ENCODE measurements at regions of chr18 and their contacts with region 1.

Region 1: GRCh38 chr18:3604498-3605408 is 154.8 kb downstream of the TGIF1 start:
- DNase-seq: peak in 3 of 4 experiments; percentile 38 to 77 (median 39)
- ATAC-seq: peak; percentile 38
- H3K4me3 ChIP-seq: peak overlapping the region; percentile 55
- H3K27ac ChIP-seq: peak overlapping the region; percentile 97
- H3K4me1 ChIP-seq: peaks cover 37 to 51% of the 10 kb centered on the region in 2 experiments
- H3K27me3 ChIP-seq: no peaks in the 10 kb centered on the region
- CTCF ChIP-seq: no peak
- EP300 ChIP-seq: peak; percentile 60
- POLR2A ChIP-seq: no peak
- RAD21 ChIP-seq: no peak; a peak in 2 of 4 replicates

Region 2: DNA sequence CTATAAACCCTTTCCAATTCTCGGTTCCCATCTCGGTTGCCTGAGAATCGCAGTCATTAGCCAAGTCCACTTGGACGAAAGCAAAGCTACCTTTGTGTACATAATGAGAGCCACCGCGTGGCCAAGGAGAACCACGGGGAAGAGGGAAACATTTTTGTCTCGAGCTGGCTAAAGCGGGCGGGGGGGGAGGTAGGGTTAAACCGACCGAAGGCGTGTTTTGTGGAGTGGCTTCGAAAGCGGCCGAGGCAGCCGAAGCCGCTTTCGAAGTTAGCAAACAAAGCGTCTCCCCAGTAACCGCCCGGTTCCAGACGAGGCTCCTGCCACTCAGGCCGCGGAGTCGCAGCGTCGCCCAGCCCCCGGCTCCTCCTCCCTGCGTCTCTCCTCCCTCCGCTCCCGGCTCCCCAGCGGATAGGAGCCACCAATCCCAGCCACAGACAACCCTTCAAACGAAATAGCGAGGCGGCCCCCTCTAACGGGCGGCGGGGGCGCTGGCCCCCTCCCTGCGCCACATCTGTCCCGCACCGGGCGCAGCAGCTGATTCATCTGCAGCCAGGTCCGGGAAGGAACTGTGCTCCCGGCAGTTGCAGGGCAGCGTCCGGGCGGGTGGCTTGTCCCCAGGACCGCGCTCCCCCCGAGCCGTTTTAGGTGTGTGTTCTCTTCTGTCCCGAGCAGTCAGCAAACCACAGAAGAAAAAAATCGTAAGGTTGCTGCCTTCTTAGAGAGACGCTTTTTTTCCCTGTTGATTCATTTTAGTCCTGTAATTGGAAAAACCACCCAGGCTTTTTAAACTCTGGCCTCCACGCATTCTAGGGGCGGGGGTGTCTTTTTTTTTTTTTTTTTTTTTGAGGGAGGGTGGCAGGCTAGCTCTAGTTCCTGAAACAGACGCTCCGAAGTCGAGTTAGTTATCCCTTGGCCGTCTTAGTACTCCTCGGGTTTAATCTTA is 156.6 kb before region 1 on chr18:
- CTCF ChIA-PET with region 1: no interaction called
- POLR2A ChIA-PET with region 1: interaction called, 35 read pairs
- in situ Hi-C with region 1: loop called (anchors 5 kb)
- intact Hi-C with region 1: loop called (anchors 2 kb)
- DNase-seq: peak; percentile 85 to 99 (median 89)
- ATAC-seq: peak; percentile 78
- H3K4me3 ChIP-seq: peak overlapping the region; percentile 87
- H3K27ac ChIP-seq: peak overlapping the region; percentile 98
- H3K4me1 ChIP-seq: peaks cover 31 to 51% of the 10 kb centered on the region in 2 experiments
- H3K27me3 ChIP-seq: no peaks in the 10 kb centered on the region
- CTCF ChIP-seq: peak in 2 of 3 experiments; percentile 31 to 49; a peak in 2 of 6 replicates
- EP300 ChIP-seq: peak; percentile 81
- POLR2A ChIP-seq: no peak
- RAD21 ChIP-seq: peak in 1 of 2 experiments; percentile 33; a peak in 3 of 4 replicates

Region 3: GRCh38 chr18:3593904-3594661 is 10.7 kb before region 1 on chr18:
- CTCF ChIA-PET with region 1: no interaction called
- POLR2A ChIA-PET with region 1: interaction called, 76 read pairs
- in situ Hi-C with region 1: no loop called
- intact Hi-C with region 1: loop called (anchors 1 kb)
- DNase-seq: peak; percentile 82 to 97 (median 86)
- ATAC-seq: peak; percentile 61
- H3K4me3 ChIP-seq: peak overlapping the region; percentile 42
- H3K27ac ChIP-seq: peak overlapping the region; percentile 94
- H3K4me1 ChIP-seq: peaks cover 44 to 60% of the 10 kb centered on the region in 2 experiments
- H3K27me3 ChIP-seq: no peaks in the 10 kb centered on the region
- CTCF ChIP-seq: peak; percentile 87 to 94 (median 90)
- EP300 ChIP-seq: peak; percentile 70
- POLR2A ChIP-seq: no peak
- RAD21 ChIP-seq: peak; percentile 48 to 66

Region 4: DNA sequence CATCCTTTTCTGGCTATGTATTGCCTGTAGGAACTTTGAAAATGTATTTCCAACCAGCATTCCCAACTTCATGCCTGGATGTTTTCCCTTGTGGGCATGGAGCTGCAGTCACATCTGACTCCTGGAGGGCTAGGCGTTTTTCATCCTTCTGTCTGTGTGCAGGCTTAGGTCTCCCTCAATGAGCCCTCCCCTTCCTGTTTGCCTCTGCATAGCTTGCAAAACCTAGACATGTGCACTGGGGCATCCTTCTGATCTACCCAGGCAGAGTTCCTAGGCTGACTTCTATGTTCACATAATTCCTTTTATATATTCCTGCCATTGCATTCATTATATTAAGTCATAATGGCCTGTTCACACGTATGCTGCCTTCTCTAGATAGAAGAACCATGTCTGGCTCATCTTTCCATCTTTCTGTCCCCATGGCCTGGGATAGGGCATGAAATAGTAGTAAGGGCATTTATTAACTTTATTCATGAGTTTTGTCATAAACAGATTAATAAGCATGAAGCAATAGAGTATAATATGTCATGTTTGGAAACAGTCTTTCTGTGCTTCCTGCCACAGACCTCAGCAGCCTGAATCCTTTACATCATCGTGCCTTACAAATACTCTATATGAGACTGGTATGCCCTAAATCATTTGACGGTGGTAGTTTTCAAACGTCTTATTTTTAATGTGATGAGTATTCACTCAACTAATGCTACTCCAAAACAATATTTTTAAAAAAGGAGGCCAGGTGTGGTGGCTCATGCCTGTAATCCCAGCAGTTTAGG is 40.8 kb after region 1 on chr18:
- CTCF ChIA-PET with region 1: no interaction called
- POLR2A ChIA-PET with region 1: interaction called, 80 read pairs
- in situ Hi-C with region 1: no loop called
- intact Hi-C with region 1: no loop called
- DNase-seq: no peak
- ATAC-seq: no peak
- H3K4me3 ChIP-seq: no peak overlapping the region
- H3K27ac ChIP-seq: no peak overlapping the region
- H3K4me1 ChIP-seq: peaks cover 11 to 20% of the 10 kb centered on the region in 2 experiments
- H3K27me3 ChIP-seq: no peaks in the 10 kb centered on the region
- CTCF ChIP-seq: no peak
- EP300 ChIP-seq: no peak
- POLR2A ChIP-seq: no peak
- RAD21 ChIP-seq: no peak

Region 5: DNA sequence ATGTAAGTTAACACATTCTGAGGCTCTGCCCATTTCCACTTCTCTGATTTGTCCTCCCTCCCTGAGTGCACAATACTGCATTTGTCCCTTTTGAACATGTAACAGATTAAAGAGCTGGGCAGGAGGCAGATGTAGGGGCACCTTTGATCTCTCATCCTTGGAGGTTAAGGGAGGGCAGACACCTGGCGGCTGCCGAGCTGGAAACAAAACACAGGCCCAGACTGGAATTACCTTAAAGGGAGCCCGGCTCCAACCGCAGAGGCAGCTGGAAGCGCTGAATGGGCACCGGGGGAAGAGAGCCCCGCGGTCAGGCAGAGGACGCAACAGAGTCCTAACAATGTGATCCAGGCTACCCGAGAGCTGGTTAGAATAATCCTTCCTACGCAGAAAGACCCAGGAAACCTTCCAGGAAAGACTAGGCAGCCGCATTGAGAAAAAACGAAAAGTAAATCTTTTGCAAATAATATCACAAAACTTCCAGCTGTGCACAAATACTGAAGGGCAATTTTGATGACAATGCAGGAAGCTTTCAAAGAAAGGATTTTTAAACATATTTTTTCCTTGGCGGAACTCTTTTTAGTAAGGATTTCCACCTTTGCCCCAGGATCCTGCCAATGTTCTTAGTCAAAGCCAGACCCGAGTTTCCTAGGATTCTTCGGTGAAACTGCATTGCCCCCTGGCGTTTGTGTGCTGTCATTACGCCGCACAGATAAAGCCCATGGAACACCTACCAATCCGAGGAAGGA is 61.2 kb after region 1 on chr18:
- CTCF ChIA-PET with region 1: interaction called, 5 read pairs
- POLR2A ChIA-PET with region 1: interaction called, 109 read pairs
- in situ Hi-C with region 1: no loop called
- intact Hi-C with region 1: loop called (anchors 2 kb)
- DNase-seq: peak; percentile 86 to 94 (median 88)
- ATAC-seq: peak; percentile 82
- H3K4me3 ChIP-seq: no peak overlapping the region
- H3K27ac ChIP-seq: peak overlapping the region; percentile 73
- H3K4me1 ChIP-seq: peaks cover 20 to 39% of the 10 kb centered on the region in 2 experiments
- H3K27me3 ChIP-seq: no peaks in the 10 kb centered on the region
- CTCF ChIP-seq: peak; percentile 91 to 98 (median 98)
- EP300 ChIP-seq: peak; percentile 52; the same call in 1 of the 2 replicates
- POLR2A ChIP-seq: no peak
- RAD21 ChIP-seq: peak; percentile 100

Measured in K562 (cell line).